A549 (cell line): ENCODE measurements at regions of chr17 and their contacts with region 1.

Region 1: GRCh38 chr17:52106638-52107261 is 51.8 kb downstream of the CA10 start:
- DNase-seq: peak; percentile 41 to 43
- ATAC-seq: peak in 1 of 2 experiments; percentile 71; a peak in 3 of 6 replicates
- H3K4me3 ChIP-seq: no peak overlapping the region
- H3K27ac ChIP-seq: no peak overlapping the region
- H3K4me1 ChIP-seq: no peaks in the 10 kb centered on the region
- CTCF ChIP-seq: peak; percentile 83
- EP300 ChIP-seq: no peak
- POLR2A ChIP-seq: no peak
- RAD21 ChIP-seq: peak; percentile 71 to 77

Region 2: GRCh38 chr17:51298508-51299371 is 808.0 kb before region 1 on chr17:
- CTCF ChIA-PET with region 1: interaction called, 14 read pairs
- POLR2A ChIA-PET with region 1: no interaction called
- DNase-seq: peak; percentile 51 to 67
- ATAC-seq: peak; percentile 79 to 82
- H3K4me3 ChIP-seq: no peak overlapping the region
- H3K27ac ChIP-seq: no peak overlapping the region
- H3K4me1 ChIP-seq: no peaks in the 10 kb centered on the region
- CTCF ChIP-seq: peak; percentile 89
- EP300 ChIP-seq: no peak
- POLR2A ChIP-seq: no peak
- RAD21 ChIP-seq: peak; percentile 80 to 82

Region 3: DNA sequence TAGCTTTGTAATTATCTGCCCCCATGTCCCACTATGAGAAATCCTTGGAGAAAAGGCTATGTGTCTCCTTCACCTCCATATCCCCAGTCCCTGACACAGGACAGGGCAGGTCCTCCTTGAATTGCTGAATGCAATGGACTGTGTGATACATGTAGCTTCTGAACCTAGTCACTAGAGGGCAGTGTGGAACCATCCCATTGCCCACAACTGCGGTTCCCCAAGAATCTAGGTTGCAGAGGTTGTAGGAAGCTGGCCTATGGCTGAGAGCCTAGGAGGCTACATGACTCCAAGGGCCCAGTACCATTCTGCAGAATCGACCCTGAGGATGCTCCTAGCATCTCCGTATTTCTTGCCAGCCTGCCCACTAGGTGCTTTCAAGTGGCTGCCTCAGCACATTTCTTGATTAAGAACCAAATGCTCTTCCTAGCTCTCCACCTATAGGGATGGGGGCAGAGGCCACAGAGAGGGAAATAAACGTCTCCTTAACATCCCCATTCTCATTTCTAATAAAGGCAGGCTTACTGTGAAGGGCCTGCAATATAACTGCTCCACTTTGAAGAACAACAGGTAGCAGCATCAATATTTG is 342.3 kb before region 1 on chr17:
- CTCF ChIA-PET with region 1: interaction called, 52 read pairs
- POLR2A ChIA-PET with region 1: no interaction called
- DNase-seq: peak; percentile 78
- ATAC-seq: peak; percentile 90 to 99
- H3K4me3 ChIP-seq: no peak overlapping the region
- H3K27ac ChIP-seq: no peak overlapping the region
- H3K4me1 ChIP-seq: no peaks in the 10 kb centered on the region
- CTCF ChIP-seq: peak; percentile 89
- EP300 ChIP-seq: no peak
- POLR2A ChIP-seq: no peak
- RAD21 ChIP-seq: peak; percentile 87 to 91

Region 4: DNA sequence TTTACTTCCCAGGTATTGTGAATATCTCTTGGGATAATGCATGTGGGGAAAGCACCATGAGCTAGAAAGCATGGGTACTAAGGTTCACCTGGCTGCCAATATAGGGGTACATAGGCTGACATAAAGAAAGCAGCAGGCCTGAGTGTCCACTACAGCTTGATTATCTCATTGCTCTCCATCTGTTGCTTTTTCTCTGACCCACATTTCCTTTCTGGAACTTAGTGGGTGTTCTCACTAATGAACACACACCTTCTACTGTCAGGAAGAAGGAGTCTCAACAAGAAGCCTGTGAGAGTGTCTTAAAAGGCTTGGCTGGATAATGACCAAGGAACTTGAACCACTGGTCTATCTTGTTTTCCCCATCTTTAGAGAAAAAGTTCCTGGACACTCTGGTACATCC is 10.7 kb before region 1 on chr17:
- CTCF ChIA-PET with region 1: interaction called, 14 read pairs
- POLR2A ChIA-PET with region 1: no interaction called
- DNase-seq: no peak
- ATAC-seq: no peak
- H3K4me3 ChIP-seq: no peak overlapping the region
- H3K27ac ChIP-seq: no peak overlapping the region
- H3K4me1 ChIP-seq: no peaks in the 10 kb centered on the region
- CTCF ChIP-seq: no peak
- EP300 ChIP-seq: no peak
- POLR2A ChIP-seq: no peak
- RAD21 ChIP-seq: no peak

Region 5: GRCh38 chr17:52120465-52120864 is 13.7 kb after region 1 on chr17:
- CTCF ChIA-PET with region 1: interaction called, 28 read pairs
- POLR2A ChIA-PET with region 1: no interaction called
- DNase-seq: no peak
- ATAC-seq: no peak
- H3K4me3 ChIP-seq: no peak overlapping the region
- H3K27ac ChIP-seq: no peak overlapping the region
- H3K4me1 ChIP-seq: no peaks in the 10 kb centered on the region
- CTCF ChIP-seq: no peak
- EP300 ChIP-seq: no peak
- POLR2A ChIP-seq: no peak
- RAD21 ChIP-seq: no peak

Region 6: DNA sequence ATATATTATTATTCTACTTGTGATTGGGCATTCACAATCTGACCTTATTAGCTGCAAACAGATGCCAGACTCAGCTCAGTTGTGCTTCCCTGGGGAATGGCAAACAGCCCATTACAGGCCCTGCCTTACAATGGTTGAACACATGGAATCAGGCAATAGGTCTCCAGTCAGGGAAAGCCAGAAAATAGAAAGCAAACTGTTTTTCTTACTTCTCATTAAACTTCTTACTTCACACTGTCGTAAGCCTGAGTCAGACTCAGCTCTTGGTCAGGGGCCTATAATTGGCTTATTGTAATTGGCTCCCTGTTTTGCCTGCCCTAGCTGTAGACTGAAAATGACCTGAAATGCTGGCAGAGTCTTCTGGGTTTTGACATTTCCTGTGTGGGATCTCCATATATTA is 128.8 kb after region 1 on chr17:
- CTCF ChIA-PET with region 1: no interaction called
- POLR2A ChIA-PET with region 1: no interaction called
- DNase-seq: no peak
- ATAC-seq: no peak
- H3K4me3 ChIP-seq: no peak overlapping the region
- H3K27ac ChIP-seq: no peak overlapping the region
- H3K4me1 ChIP-seq: no peaks in the 10 kb centered on the region
- CTCF ChIP-seq: no peak
- EP300 ChIP-seq: no peak
- POLR2A ChIP-seq: no peak
- RAD21 ChIP-seq: no peak